ENCODE measurements at regions of chr10 and their contacts with region 1.

Region 1: GRCh38 chr10:132588301-132589013 is 50.9 kb downstream of the INPP5A start:
- DNase-seq: peak in 4 of 9 donors; percentile 18 to 49 (median 22)
- ATAC-seq: peak; percentile 79
- H3K4me3 ChIP-seq: no peak overlapping the region
- H3K4me3 Mint-ChIP-seq: peak overlapping the region; percentile 57 to 85 (median 74)
- H3K27ac ChIP-seq: no peak overlapping the region
- H3K27ac Mint-ChIP-seq: peak overlapping the region in 7 of 9 donors; percentile 3 to 85 (median 69)
- H3K4me1 ChIP-seq: peaks cover 5 to 26% of the 10 kb centered on the region in 2 donors
- H3K4me1 Mint-ChIP-seq: peaks cover 47 to 86% (median 71%) of the 10 kb centered on the region in 7 donors
- H3K27me3 ChIP-seq: no peaks in the 10 kb centered on the region
- H3K27me3 Mint-ChIP-seq: peaks cover 0 to 2% (median 0%) of the 10 kb centered on the region in 5 donors

Region 2: DNA sequence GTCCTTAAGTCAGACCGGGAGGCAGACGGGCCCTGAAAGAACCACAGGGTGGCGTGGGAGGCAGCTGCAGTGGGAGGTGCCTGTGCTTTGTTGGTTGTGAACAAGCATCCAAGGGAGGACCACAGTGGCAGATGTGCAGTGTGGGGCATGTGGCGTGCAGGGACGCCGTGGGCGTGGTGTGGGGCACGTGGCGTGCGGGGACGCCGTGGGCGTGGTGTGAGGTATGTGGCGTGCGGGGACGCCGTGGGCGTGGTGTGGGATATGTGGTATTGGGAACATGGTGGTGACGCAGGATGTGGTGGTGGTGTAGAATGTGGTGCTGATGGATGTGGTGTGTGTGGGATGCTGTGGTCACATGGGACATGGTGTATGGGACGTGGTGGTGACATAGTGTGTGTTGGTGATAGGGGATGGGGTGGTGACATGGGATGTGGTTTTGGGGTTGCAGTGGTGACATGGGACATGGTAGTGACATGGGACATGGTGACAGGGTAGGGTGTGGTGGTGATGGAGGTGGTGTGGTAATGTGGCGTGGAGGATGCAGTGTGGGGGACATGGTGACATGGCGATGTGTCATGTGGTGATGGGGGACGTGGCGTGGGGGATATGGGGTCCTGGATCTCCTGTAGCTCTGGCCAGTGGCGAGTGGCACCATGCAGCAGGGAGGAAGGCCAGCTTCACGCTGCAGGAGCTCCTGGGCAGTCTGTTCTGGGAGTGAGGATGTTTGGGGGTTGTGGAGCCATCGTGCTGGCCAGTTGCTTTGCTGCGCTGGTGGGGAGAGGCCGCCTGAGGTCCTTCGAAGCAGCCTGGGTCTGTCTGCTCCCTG is 27.9 kb after region 1 on chr10:
- CTCF ChIA-PET with region 1: no interaction called
- POLR2A ChIA-PET with region 1: no interaction called
- intact Hi-C with region 1: loop called in 1 of 2 experiments (anchors 1 kb)
- DNase-seq: peak in 8 of 9 donors; percentile 64 to 78 (median 70)
- ATAC-seq: peak; percentile 85
- H3K4me3 ChIP-seq: no peak overlapping the region
- H3K4me3 Mint-ChIP-seq: peak overlapping the region; percentile 1 to 83 (median 56)
- H3K27ac ChIP-seq: no peak overlapping the region
- H3K27ac Mint-ChIP-seq: peak overlapping the region; percentile 40 to 95 (median 88)
- H3K4me1 ChIP-seq: peaks cover 12 to 18% of the 10 kb centered on the region in 2 donors
- H3K4me1 Mint-ChIP-seq: peaks cover 22 to 38% (median 28%) of the 10 kb centered on the region in 7 donors
- H3K27me3 ChIP-seq: no peaks in the 10 kb centered on the region
- H3K27me3 Mint-ChIP-seq: peaks cover 0 to 11% (median 0%) of the 10 kb centered on the region in 5 donors